Caco-2 (cell line): ENCODE measurements at regions of chr2 and their contacts with region 1.

Region 1: GRCh38 chr2:200352636-200353035 is 46.1 kb downstream of the SPATS2L start:
- DNase-seq: peak; percentile 78 to 82
- H3K4me3 ChIP-seq: no peak overlapping the region
- H3K4me3 Mint-ChIP-seq: peak overlapping the region; percentile 67
- H3K27ac Mint-ChIP-seq: peak overlapping the region; percentile 89
- H3K4me1 ChIP-seq: peaks cover 78% of the 10 kb centered on the region
- H3K4me1 Mint-ChIP-seq: peaks cover 74% of the 10 kb centered on the region
- H3K27me3 ChIP-seq: no peaks in the 10 kb centered on the region
- H3K27me3 Mint-ChIP-seq: no peaks in the 10 kb centered on the region
- CTCF ChIP-seq: no peak

Region 2: DNA sequence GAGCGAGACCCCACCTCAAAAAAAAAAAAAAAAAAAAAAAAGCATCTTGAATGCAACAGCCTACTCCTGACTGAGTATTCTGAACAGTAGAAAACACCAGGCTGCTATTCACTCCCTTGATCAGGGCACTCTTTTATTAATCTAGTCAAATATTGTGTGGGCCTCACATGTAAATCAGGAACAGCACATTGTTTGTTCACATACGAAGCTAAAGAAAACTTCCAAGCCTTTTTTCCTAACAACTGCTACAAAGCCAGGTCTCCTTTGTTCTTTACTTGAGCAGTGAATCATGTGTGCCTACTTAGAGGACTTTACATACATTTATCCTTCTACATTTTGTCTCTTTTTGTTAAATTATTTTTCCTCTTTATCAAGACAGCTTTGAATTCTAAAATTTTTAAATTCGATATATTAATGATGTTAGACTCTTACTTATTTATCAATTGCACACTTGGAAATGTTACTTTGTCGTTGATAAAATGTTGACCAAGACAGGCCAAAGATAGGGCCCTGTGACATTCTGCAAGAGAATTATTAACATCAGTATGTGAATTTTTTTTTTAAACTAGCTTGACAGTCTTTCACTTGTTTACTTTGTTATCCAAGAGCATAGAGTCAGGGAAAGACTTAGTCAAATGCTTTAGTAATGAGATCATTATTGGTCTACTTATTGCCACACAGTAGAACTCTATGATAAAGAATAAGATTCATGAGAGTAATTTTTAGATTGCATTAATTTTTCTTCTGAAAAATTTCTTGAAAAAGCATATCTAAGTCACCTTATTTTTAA is 32.9 kb before region 1 on chr2:
- CTCF ChIA-PET with region 1: no interaction called
- POLR2A ChIA-PET with region 1: no interaction called
- intact Hi-C with region 1: loop called (anchors 1 kb)
- DNase-seq: peak in 1 of 2 experiments; percentile 35
- H3K4me3 ChIP-seq: no peak overlapping the region
- H3K4me3 Mint-ChIP-seq: no peak overlapping the region
- H3K27ac Mint-ChIP-seq: peak overlapping the region; percentile 54
- H3K4me1 ChIP-seq: peaks cover 88% of the 10 kb centered on the region
- H3K4me1 Mint-ChIP-seq: peaks cover 42% of the 10 kb centered on the region
- H3K27me3 ChIP-seq: no peaks in the 10 kb centered on the region
- H3K27me3 Mint-ChIP-seq: no peaks in the 10 kb centered on the region
- CTCF ChIP-seq: no peak

Region 3: DNA sequence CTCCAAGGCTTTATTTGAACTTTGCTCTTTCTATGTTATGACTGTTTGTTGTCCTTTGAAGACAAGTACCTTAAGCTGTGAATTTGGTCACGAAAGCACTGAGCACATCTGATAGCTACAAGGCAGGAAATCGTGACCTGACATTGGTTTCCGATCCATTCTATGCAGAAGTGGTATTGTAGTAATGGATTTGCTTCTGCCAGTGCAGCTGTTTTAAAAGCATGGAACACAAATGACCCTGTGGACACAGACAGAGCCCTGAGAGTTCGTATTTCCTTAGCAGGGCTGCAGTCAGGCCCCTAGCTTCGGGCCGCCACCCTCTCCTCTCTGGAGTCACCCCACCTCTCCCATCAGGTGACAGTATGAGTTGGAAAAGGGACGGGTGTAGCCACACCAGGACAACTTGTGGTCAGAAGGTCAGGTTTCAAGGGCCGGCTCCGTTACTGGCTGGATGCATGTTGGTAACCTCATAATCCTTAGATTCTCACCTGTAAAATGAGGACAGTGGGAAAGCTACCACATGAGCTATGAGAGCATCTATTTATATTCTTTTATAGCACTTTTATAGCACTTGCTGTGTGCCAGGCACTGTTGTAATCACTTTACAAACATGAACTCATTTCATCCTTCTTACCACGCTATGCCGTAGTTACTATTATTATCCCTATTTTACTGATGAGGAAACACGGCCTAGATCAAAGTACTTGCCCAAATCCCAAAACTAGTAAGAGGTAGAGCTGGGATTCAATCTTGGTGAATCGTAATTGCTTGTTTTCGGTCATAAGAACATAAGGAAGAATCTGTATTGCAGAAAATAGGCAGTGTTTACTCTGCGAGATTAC is 24.1 kb after region 1 on chr2:
- CTCF ChIA-PET with region 1: no interaction called
- POLR2A ChIA-PET with region 1: no interaction called
- intact Hi-C with region 1: loop called (anchors 1 kb)
- DNase-seq: peak in 1 of 2 experiments; percentile 57
- H3K4me3 ChIP-seq: no peak overlapping the region
- H3K4me3 Mint-ChIP-seq: peak overlapping the region; percentile 65
- H3K27ac Mint-ChIP-seq: peak overlapping the region; percentile 90
- H3K4me1 ChIP-seq: peaks cover 91% of the 10 kb centered on the region
- H3K4me1 Mint-ChIP-seq: peaks cover 74% of the 10 kb centered on the region
- H3K27me3 ChIP-seq: no peaks in the 10 kb centered on the region
- H3K27me3 Mint-ChIP-seq: no peaks in the 10 kb centered on the region
- CTCF ChIP-seq: no peak